Activated T-helper 1 cell treated with anti-CD3 and anti-CD28 coated beads, Interleukin-12 subunit alpha, Interleukin-12 subunit beta, Interleukin-2, Interleukin-4 antibody, amounts not matched to agents 30 ng/mL and 10 ng/mL and 1 ng/mL, durations not matched to agents 14 hours and 24 hours and 36 hours (primary cell): ENCODE measurements at regions of chr14 and their contacts with region 1.

Region 1: DNA sequence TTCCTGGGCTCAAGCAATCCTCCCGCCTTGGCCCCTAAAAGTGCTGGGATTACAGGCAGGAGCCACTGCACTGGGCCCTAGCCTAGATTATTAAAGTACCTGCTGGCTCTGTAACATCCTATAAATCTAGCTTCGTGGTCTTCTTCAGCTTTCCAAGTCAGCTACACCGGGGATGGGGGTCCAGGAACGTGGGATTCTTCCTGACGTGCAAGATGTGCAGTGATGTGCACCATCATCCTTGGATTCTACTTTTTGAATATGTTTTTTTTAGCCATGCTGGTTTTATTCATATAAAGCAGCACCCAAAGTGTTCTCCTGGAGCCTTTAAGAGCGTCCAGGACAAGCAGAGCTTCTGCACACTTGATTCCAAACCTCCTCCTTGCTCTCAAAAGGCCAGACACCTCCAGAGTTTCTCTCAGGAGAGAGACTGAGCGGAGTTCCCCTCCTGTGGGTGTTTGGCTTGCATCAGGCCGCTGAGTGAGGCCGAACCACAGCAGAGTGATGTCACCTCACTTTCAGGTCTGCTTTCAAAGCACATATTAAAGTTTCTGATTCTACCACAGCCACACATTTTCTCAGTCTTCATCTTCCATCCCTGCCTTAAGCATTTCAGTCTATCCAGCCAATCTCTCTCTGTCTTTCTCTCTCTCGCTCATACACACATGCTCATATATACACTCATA is 33.4 kb downstream of the VCPKMT start:
- DNase-seq: peak; percentile 84
- H3K4me3 Mint-ChIP-seq: peak overlapping the region; percentile 16
- H3K27ac Mint-ChIP-seq: peak overlapping the region; percentile 90
- H3K4me1 Mint-ChIP-seq: peaks cover 70% of the 10 kb centered on the region
- H3K27me3 Mint-ChIP-seq: no peaks in the 10 kb centered on the region

Region 2: DNA sequence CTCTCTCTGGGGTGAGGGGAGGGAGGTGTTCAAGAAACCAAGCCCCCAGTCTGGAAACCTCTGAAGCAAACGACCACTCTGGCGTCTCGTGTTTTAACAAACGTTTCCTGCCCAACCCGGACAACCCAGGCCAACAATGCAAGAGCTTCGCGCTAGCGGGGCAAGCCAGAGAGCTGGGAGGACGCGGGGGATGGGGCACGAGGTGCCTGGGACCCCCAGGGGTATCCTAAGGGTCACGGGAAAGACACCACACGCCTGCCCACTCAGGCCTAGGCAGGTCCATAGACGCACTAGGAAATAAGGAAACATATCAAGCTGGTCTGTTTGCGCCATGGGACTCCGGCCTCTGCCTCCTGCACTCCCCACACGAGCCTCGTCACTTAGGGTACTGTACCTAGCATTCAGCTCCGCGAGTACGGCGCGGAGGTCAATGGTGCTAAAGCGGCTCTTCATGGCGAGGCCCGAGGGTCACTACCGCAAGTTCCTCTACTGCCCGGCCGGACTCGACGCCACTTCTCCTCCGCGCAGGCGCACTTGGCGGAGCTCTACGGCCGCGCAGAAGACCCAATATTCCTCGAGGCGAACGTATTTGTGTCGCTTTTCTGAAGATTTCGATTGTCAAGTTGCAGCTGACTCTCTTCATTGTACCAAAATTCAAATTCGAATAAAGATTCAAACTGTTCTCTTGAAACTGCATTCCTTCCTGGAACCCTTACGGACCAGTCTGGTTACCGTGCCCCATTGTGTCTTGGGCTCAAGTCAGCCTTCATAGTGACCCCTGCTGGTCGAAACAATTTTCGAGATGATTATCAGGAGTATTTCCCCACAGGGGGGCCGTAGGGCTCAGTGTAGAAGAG is 230.4 kb before region 1 on chr14 and contains the start of gene NEMF:
- intact Hi-C with region 1: loop called (anchors 1 kb)
- DNase-seq: peak; percentile 78
- H3K4me3 Mint-ChIP-seq: peak within 1 kb of the TSS; percentile 96
- H3K27ac Mint-ChIP-seq: peak within 1 kb of the TSS; percentile 97
- H3K4me1 Mint-ChIP-seq: peaks cover 50% of the 10 kb centered on the region
- H3K27me3 Mint-ChIP-seq: no peaks in the 10 kb centered on the region
- total RNA-seq, gene NEMF: 79.9 and 89.3 TPM in 2 replicates

Region 3: GRCh38 chr14:49867831-49868723 is 214.8 kb before region 1 on chr14:
- intact Hi-C with region 1: loop called (anchors 1 kb)
- DNase-seq: peak; percentile 92
- H3K4me3 Mint-ChIP-seq: peak overlapping the region; percentile 93
- H3K27ac Mint-ChIP-seq: peak overlapping the region; percentile 97
- H3K4me1 Mint-ChIP-seq: peaks cover 20% of the 10 kb centered on the region
- H3K27me3 Mint-ChIP-seq: no peaks in the 10 kb centered on the region

Region 4: GRCh38 chr14:49984424-49984823 is 98.5 kb before region 1 on chr14:
- intact Hi-C with region 1: loop called (anchors 1 kb)
- DNase-seq: no peak
- H3K4me3 Mint-ChIP-seq: no peak overlapping the region
- H3K27ac Mint-ChIP-seq: peak overlapping the region; percentile 93
- H3K4me1 Mint-ChIP-seq: peaks cover 66% of the 10 kb centered on the region
- H3K27me3 Mint-ChIP-seq: no peaks in the 10 kb centered on the region

Region 5: DNA sequence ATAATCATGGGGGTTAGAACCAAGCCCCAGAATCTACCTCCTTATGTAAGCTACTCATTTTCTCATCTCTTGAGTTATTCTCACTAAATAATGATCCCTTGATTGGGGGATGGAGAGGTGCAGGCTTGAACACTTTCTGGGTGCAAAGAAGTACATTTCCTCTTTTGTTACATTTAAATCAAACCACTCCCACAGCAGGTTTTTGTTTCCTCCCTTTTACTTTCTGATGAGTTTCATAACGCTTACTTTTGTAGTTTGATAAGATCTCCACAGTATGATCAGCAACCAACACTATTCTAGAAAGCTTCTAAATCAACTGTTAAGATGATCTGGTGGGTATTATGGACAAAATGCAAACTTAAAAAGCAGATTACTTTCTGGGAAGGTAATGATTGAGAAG is 13.0 kb after region 1 on chr14:
- intact Hi-C with region 1: loop called (anchors 1 kb)
- DNase-seq: no peak
- H3K4me3 Mint-ChIP-seq: peak overlapping the region; percentile 31
- H3K27ac Mint-ChIP-seq: peak overlapping the region; percentile 46
- H3K4me1 Mint-ChIP-seq: peaks cover 59% of the 10 kb centered on the region
- H3K27me3 Mint-ChIP-seq: peaks cover 3% of the 10 kb centered on the region